MCF 10A (cell line): ENCODE measurements at regions of chr20 and their contacts with region 1.

Region 1: GRCh38 chr20:46132705-46133120 is 14.6 kb downstream of the CD40 start:
- DNase-seq: peak; percentile 62
- H3K4me3 Mint-ChIP-seq: no peak overlapping the region
- H3K27ac Mint-ChIP-seq: no peak overlapping the region
- H3K4me1 Mint-ChIP-seq: no peaks in the 10 kb centered on the region
- H3K27me3 Mint-ChIP-seq: peaks cover 23% of the 10 kb centered on the region
- CTCF ChIP-seq: peak; percentile 90

Region 2: DNA sequence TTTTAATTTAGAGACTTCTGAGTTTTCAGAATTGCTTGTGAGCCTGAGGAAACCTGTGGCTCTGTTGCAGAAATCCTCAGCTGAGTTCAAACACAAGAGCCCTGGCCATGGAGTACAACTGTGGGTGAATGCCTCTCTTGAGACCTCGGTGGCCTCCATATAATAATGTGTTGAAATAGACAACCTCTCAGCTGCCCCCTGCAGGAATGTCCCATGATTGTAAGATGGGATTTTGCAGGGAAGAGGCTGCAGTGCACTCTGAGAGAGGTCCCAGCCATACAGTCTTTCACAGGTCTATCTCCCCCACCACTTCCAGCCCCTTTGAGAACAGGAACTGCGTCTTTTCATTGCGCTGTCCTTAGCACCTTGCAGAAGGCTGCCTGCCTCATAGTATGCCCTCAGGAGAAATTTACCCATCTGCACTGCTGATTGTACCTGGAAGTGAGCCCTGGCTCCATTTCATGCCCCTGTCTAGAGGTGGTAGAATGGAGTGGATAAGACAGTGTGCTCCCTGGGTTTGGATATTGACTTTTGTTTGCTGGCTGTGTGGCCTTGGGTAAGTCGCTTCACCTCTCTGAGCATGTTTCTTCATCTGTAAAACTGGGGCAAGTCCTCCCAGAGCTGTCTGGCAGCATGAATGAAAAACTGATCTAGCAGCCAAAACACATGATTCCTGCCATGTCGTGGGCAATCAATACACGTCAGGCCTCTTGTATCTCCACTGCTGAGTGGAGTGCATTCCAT is 192.4 kb after region 1 on chr20:
- CTCF ChIA-PET with region 1: interaction called, 10 read pairs
- POLR2A ChIA-PET with region 1: no interaction called
- intact Hi-C with region 1: loop called (anchors 1 kb)
- DNase-seq: peak; percentile 52
- H3K4me3 Mint-ChIP-seq: no peak overlapping the region
- H3K27ac Mint-ChIP-seq: no peak overlapping the region
- H3K4me1 Mint-ChIP-seq: peaks cover 5% of the 10 kb centered on the region
- H3K27me3 Mint-ChIP-seq: peaks cover 45% of the 10 kb centered on the region
- CTCF ChIP-seq: peak; percentile 37

Region 3: GRCh38 chr20:46349035-46349741 is 216.5 kb after region 1 on chr20:
- CTCF ChIA-PET with region 1: interaction called, 146 read pairs
- POLR2A ChIA-PET with region 1: interaction called, 4 read pairs
- intact Hi-C with region 1: loop called (anchors 1 kb)
- DNase-seq: peak; percentile 47
- H3K4me3 Mint-ChIP-seq: no peak overlapping the region
- H3K27ac Mint-ChIP-seq: no peak overlapping the region
- H3K4me1 Mint-ChIP-seq: peaks cover 11% of the 10 kb centered on the region
- H3K27me3 Mint-ChIP-seq: no peaks in the 10 kb centered on the region
- CTCF ChIP-seq: peak; percentile 60

Region 4: DNA sequence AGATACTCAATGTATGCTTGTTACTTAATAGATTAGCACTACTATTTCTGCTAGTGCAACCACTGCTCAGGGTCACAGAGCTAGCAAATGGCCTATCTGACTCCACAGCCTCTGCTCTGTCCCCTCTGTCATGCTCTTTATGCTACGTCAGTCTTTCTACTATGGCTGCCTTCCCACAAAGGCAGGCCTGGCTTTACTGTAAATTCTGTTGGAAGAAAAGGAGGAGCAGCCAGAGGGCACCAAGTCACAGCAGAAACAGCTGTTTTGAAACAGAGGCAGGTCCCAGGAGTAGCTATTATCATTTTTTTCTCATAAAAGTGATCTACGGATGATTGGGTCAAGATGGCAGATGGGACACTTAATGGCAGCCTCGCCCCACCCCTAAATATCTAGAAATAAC is 283.7 kb after region 1 on chr20:
- CTCF ChIA-PET with region 1: interaction called, 24 read pairs
- POLR2A ChIA-PET with region 1: no interaction called
- intact Hi-C with region 1: no loop called
- DNase-seq: no peak
- H3K4me3 Mint-ChIP-seq: no peak overlapping the region
- H3K27ac Mint-ChIP-seq: no peak overlapping the region
- H3K4me1 Mint-ChIP-seq: no peaks in the 10 kb centered on the region
- H3K27me3 Mint-ChIP-seq: peaks cover 81% of the 10 kb centered on the region
- CTCF ChIP-seq: no peak